ENCODE measurements at regions of chr20 and their contacts with region 1.

Region 1: DNA sequence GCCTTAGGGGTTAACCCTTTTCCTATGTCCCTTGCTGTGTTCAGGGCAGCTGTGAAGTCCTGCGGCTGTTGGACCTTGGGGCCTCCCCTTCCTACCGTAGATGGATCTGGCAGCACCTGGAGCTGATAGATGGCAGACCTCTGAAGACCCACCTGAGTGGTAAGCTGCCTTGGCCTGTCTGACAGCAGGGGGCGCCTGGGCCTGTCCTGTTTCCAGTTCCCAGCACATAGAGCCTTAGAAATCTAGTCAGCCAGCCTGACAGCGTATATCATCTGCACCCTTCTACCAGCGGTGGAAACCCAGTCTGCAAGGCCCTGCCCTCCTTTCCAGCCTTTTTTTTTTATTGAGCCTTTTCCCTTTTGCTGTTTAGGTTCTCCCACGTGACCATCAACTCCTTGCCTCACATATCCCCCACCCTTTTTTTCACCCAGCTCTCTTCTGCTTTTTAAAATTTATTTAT is 26.6 kb downstream of the CNBD2 start:
- DNase-seq: peak; percentile 79
- H3K4me3 ChIP-seq: peak overlapping the region in 1 of 2 experiments; percentile 34; a peak in 1 of 4 replicates
- H3K27ac ChIP-seq: no peak overlapping the region
- H3K4me1 ChIP-seq: no peaks in the 10 kb centered on the region
- H3K27me3 ChIP-seq: no peaks in the 10 kb centered on the region
- CTCF ChIP-seq: peak; percentile 98
- EP300 ChIP-seq: no peak
- RAD21 ChIP-seq: peak; percentile 91

Region 2: GRCh38 chr20:35575970-35576623 is 418.9 kb before region 1 on chr20:
- CTCF ChIA-PET with region 1: no interaction called
- POLR2A ChIA-PET with region 1: no interaction called
- DNase-seq: no peak
- H3K4me3 ChIP-seq: no peak overlapping the region
- H3K27ac ChIP-seq: no peak overlapping the region
- H3K4me1 ChIP-seq: no peaks in the 10 kb centered on the region
- H3K27me3 ChIP-seq: no peaks in the 10 kb centered on the region
- CTCF ChIP-seq: no peak
- EP300 ChIP-seq: no peak
- RAD21 ChIP-seq: no peak

Region 3: DNA sequence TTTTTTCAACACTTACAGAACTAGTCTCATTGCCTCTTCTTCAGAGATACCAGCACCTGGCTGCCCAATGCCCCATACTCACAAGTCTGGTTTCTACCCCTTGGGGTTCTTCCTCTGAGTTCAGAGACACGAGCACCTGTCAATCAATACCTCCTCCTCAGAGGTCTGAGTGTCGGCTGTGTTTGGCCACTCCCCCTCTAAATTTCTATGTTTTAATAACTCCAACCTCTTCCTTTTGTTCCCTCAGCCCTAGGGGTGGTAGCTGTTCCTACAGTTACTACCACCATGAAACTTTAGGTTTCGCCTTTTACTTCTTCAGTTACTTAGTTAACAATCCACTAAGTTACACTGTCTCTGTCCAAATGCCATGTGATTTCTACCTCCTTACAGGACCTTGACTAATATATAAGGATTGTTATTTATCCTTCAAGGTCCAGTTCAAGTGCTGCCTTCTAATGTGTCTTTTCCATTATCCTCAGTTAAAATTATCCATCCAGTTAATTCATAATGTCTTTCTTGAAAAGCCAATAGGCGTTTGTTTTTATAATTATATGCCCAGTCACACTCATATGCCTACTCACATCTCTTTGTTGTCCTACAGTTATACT is 237.8 kb before region 1 on chr20:
- CTCF ChIA-PET with region 1: no interaction called
- POLR2A ChIA-PET with region 1: no interaction called
- DNase-seq: no peak
- H3K4me3 ChIP-seq: no peak overlapping the region
- H3K27ac ChIP-seq: no peak overlapping the region
- H3K4me1 ChIP-seq: no peaks in the 10 kb centered on the region
- H3K27me3 ChIP-seq: no peaks in the 10 kb centered on the region
- CTCF ChIP-seq: no peak
- EP300 ChIP-seq: no peak
- RAD21 ChIP-seq: no peak

Region 4: GRCh38 chr20:35963878-35964277 is 31.1 kb before region 1 on chr20:
- CTCF ChIA-PET with region 1: interaction called, 24 read pairs
- POLR2A ChIA-PET with region 1: no interaction called
- DNase-seq: no peak
- H3K4me3 ChIP-seq: no peak overlapping the region
- H3K27ac ChIP-seq: no peak overlapping the region
- H3K4me1 ChIP-seq: no peaks in the 10 kb centered on the region
- H3K27me3 ChIP-seq: no peaks in the 10 kb centered on the region; the same call in 1 of the 2 replicates
- CTCF ChIP-seq: no peak
- EP300 ChIP-seq: no peak
- RAD21 ChIP-seq: no peak

Region 5: GRCh38 chr20:35981969-35982368 is 13.1 kb before region 1 on chr20:
- CTCF ChIA-PET with region 1: interaction called, 58 read pairs
- POLR2A ChIA-PET with region 1: no interaction called
- DNase-seq: no peak
- H3K4me3 ChIP-seq: no peak overlapping the region
- H3K27ac ChIP-seq: no peak overlapping the region
- H3K4me1 ChIP-seq: no peaks in the 10 kb centered on the region
- H3K27me3 ChIP-seq: no peaks in the 10 kb centered on the region
- CTCF ChIP-seq: no peak
- EP300 ChIP-seq: no peak
- RAD21 ChIP-seq: no peak

Region 6: GRCh38 chr20:36113566-36114250 is 118.7 kb after region 1 on chr20:
- CTCF ChIA-PET with region 1: interaction called, 13 read pairs
- POLR2A ChIA-PET with region 1: no interaction called
- DNase-seq: no peak
- H3K4me3 ChIP-seq: no peak overlapping the region
- H3K27ac ChIP-seq: no peak overlapping the region
- H3K4me1 ChIP-seq: no peaks in the 10 kb centered on the region
- H3K27me3 ChIP-seq: no peaks in the 10 kb centered on the region
- CTCF ChIP-seq: no peak
- EP300 ChIP-seq: no peak
- RAD21 ChIP-seq: no peak

Region 7: GRCh38 chr20:36153736-36154699 is 159.0 kb after region 1 on chr20:
- CTCF ChIA-PET with region 1: interaction called, 560 read pairs
- POLR2A ChIA-PET with region 1: no interaction called
- DNase-seq: peak; percentile 98
- H3K4me3 ChIP-seq: peak overlapping the region; percentile 88 to 89
- H3K27ac ChIP-seq: peak overlapping the region; percentile 8 to 50; a peak in 2 of 4 replicates
- H3K4me1 ChIP-seq: peaks cover 0 to 31% of the 10 kb centered on the region in 2 experiments; a peak in 2 of 4 replicates
- H3K27me3 ChIP-seq: no peaks in the 10 kb centered on the region
- CTCF ChIP-seq: no peak
- EP300 ChIP-seq: no peak
- RAD21 ChIP-seq: no peak

Measured in SK-N-SH (cell line).